ENCODE measurements at regions of chr6 and their contacts with region 1.

Region 1: GRCh38 chr6:83067448-83068413 is at the start of gene DOP1A:
- DNase-seq: peak; percentile 94 to 97
- H3K4me3 ChIP-seq: peak within 1 kb of the TSS; percentile 78 to 89
- H3K27ac ChIP-seq: peak within 1 kb of the TSS; percentile 85 to 89
- H3K4me1 ChIP-seq: peaks cover 0 to 24% (median 14%) of the 10 kb centered on the region in 4 donors
- H3K27me3 ChIP-seq: no peaks in the 10 kb centered on the region
- CTCF ChIP-seq: peak; percentile 89 to 96

Region 2: GRCh38 chr6:83193747-83194566 is 126.2 kb after region 1 on chr6:
- intact Hi-C with region 1: loop called (anchors 2 kb)
- DNase-seq: peak; percentile 42 to 76
- H3K4me3 ChIP-seq: peak overlapping the region; percentile 66 to 99
- H3K27ac ChIP-seq: peak overlapping the region; percentile 77 to 96
- H3K4me1 ChIP-seq: peaks cover 0 to 37% (median 13%) of the 10 kb centered on the region in 4 donors
- H3K27me3 ChIP-seq: no peaks in the 10 kb centered on the region
- CTCF ChIP-seq: no peak

Region 3: GRCh38 chr6:83221889-83222479 is 154.3 kb after region 1 on chr6:
- intact Hi-C with region 1: loop called (anchors 2 kb)
- DNase-seq: no peak
- H3K4me3 ChIP-seq: no peak overlapping the region
- H3K27ac ChIP-seq: no peak overlapping the region
- H3K4me1 ChIP-seq: peaks cover 0 to 17% (median 1%) of the 10 kb centered on the region in 4 donors
- H3K27me3 ChIP-seq: no peaks in the 10 kb centered on the region
- CTCF ChIP-seq: peak; percentile 45 to 58

Region 4: DNA sequence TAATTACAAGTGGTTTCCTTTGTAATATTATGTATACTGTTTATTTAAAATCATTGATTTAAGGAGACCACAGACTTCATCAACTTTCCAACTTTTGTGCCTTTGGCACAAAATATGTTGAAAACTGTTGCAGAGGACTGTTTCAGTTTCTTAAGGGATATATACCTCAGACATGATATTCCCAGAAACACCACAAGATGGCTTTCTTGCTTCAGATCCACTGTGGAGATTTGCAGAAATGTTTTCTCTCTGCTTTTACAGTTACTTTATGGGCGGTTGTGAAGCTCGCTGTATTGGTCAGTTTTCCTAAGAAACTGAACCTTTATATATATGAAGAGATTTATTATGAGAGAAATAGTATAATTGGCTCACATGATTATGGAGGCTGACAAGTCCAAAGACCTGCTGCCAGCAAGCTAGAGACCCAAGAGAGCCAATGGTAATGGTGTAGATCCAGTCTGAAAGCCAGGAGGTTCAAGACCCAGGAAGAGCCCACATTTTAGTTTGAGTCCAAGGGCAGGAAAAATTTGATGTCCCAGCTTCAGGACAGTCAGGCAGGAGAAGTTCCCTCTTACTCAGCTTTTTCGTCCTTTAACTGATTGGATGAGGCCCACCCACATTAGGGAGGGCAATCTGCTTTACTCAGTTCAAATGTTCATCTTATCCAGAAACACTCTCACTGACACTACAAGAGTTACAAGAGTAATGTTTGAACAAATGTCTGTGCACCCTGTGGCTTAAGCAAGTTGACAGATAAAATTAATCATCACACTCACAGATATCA is 350.3 kb after region 1 on chr6:
- intact Hi-C with region 1: loop called (anchors 10 kb)
- DNase-seq: no peak
- H3K4me3 ChIP-seq: no peak overlapping the region
- H3K27ac ChIP-seq: no peak overlapping the region
- H3K4me1 ChIP-seq: no peaks in the 10 kb centered on the region
- H3K27me3 ChIP-seq: no peaks in the 10 kb centered on the region
- CTCF ChIP-seq: peak; percentile 71 to 77

Region 5: DNA sequence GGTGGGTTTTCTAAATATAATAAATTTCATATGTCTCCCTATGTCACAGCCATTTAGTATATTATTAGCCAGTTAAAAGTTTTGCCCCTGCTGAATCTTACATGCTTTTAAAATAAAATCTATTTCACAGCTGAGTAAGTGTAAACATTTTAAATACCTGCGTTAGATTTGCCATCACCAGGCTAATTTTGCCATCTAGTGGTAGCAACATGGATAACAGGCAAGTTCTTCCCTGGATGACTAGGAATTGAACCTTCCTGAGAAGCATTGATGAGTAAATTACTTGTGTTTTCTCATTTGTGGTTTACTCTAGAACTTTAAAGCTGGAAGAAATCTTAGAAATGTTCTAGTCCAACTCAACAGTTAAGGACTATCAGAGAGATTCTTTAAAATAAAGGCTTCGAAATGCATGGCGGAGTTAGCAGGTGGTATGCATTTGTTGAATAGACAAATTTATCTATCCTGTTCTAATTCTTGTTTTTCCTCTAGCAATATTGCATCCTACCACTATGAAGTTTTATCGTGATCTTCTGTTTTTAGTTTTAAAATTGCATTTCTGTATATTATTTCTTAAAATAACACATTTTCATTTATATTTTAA is 447.2 kb after region 1 on chr6:
- intact Hi-C with region 1: loop called (anchors 5 kb)
- DNase-seq: no peak
- H3K4me3 ChIP-seq: no peak overlapping the region
- H3K27ac ChIP-seq: no peak overlapping the region
- H3K4me1 ChIP-seq: peaks cover 0 to 40% (median 6%) of the 10 kb centered on the region in 4 donors
- H3K27me3 ChIP-seq: no peaks in the 10 kb centered on the region
- CTCF ChIP-seq: peak; percentile 79 to 83

Measured in tibial artery (tissue), 4 donors.